ENCODE measurements at regions of chr14 and their contacts with region 1.

Region 1: GRCh38 chr14:50667996-50668825 is at the start of gene SAV1:
- DNase-seq: peak; percentile 84
- H3K4me3 Mint-ChIP-seq: no peak within 1 kb of the TSS
- H3K27ac Mint-ChIP-seq: peak within 1 kb of the TSS; percentile 50
- H3K4me1 Mint-ChIP-seq: peaks cover 13% of the 10 kb centered on the region
- H3K27me3 Mint-ChIP-seq: peaks cover 2% of the 10 kb centered on the region
- total RNA-seq, gene SAV1: 9.9 and 10.8 TPM in 2 replicates

Region 2: DNA sequence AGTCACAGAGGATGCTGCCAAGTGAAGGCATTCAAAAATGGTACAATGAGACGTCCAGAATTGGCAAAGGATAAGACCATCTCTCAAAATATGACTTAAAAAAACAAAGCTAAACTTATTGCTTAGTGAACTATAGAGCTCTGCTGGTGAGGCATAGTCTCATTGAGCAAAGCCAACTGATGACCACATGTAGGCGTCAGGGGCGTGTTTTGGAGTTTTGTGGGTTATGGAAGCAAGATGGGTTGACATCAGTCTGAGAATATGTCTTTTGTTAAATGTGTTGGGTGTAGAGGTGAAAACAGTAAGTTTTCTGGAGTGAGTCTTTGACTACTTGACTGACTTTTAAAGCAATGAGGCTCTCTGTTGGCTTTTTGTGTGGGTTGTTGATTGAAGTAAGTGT is 61.0 kb before region 1 on chr14:
- intact Hi-C with region 1: loop called (anchors 5 kb)
- DNase-seq: no peak
- H3K4me3 Mint-ChIP-seq: no peak overlapping the region
- H3K27ac Mint-ChIP-seq: peak overlapping the region; percentile 7
- H3K4me1 Mint-ChIP-seq: peaks cover 7% of the 10 kb centered on the region
- H3K27me3 Mint-ChIP-seq: peaks cover 24% of the 10 kb centered on the region

Region 3: GRCh38 chr14:50647282-50647681 is 20.9 kb before region 1 on chr14:
- intact Hi-C with region 1: no loop called
- DNase-seq: no peak
- H3K4me3 Mint-ChIP-seq: no peak overlapping the region
- H3K27ac Mint-ChIP-seq: no peak overlapping the region
- H3K4me1 Mint-ChIP-seq: no peaks in the 10 kb centered on the region
- H3K27me3 Mint-ChIP-seq: no peaks in the 10 kb centered on the region

Region 4: GRCh38 chr14:50773632-50774541 is 105.7 kb after region 1 on chr14:
- intact Hi-C with region 1: loop called (anchors 5 kb)
- DNase-seq: peak; percentile 77
- H3K4me3 Mint-ChIP-seq: no peak overlapping the region
- H3K27ac Mint-ChIP-seq: peak overlapping the region; percentile 2
- H3K4me1 Mint-ChIP-seq: peaks cover 18% of the 10 kb centered on the region
- H3K27me3 Mint-ChIP-seq: no peaks in the 10 kb centered on the region

Region 5: GRCh38 chr14:51792819-51793218 is 1124.6 kb after region 1 on chr14:
- intact Hi-C with region 1: no loop called
- DNase-seq: no peak
- H3K4me3 Mint-ChIP-seq: no peak overlapping the region
- H3K27ac Mint-ChIP-seq: no peak overlapping the region
- H3K4me1 Mint-ChIP-seq: no peaks in the 10 kb centered on the region
- H3K27me3 Mint-ChIP-seq: peaks cover 29% of the 10 kb centered on the region